ENCODE measurements at regions of chr15 and their contacts with region 1.

Region 1: GRCh38 chr15:55799291-55800212 is 56.6 kb upstream of the PRTG start:
- DNase-seq: peak; percentile 55 to 86
- H3K4me3 ChIP-seq: no peak overlapping the region
- H3K4me1 ChIP-seq: peaks cover 12% of the 10 kb centered on the region
- H3K27me3 ChIP-seq: peaks cover 3% of the 10 kb centered on the region; the same call in 1 of the 2 replicates

Region 2: DNA sequence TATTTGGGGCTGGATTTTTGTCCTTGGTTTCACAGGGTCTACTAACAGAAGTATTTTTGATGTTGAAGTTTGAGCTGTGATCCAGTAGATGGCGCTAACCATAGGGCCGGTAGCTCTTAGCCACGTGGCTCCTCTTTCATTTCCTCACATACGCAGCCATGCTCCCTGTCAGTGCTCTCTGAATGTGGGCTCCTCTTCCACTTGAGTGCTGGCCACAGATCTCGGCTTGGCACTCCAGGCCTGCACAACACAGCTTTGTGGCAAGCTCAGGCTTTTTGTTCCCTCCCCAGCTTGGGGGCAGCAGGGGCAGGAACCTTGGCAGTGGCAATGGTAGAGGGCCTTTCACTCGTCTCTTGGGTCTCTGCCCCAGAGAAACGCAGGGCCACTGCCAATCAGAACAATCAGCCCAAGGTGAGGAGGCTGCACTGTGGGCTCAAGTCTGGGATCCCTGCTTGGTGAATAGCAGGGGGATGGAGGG is 273.0 kb before region 1 on chr15:
- in situ Hi-C with region 1: loop called (anchors 10 kb)
- DNase-seq: peak; percentile 61 to 75
- H3K4me3 ChIP-seq: no peak overlapping the region
- H3K4me1 ChIP-seq: no peaks in the 10 kb centered on the region; the same call in 1 of the 2 replicates
- H3K27me3 ChIP-seq: 0 out of 2 replicates have a peak, but pooled peaks cover 2% of the 10 kb centered on the region

Region 3: DNA sequence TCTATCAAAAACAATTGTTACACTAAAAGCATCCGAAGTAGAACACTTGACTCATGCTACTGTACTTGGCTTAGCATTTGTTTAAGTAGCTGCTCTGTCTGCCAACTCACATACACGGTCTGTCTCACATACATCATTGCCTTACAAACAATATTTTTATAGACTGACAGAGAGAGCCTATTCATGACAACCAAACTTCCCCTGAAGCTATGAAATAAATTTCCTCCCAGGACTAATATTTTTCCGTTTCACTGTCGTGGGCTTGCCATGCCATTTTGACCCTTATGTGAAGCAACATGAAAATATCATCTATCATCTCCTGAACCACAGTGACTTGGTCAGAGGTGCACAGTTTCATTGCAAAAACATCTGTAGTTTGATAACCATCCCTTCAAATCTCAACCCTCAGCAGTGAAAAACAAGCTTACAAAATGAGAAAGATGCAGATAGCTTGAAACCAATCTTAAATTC is 145.0 kb before region 1 on chr15:
- in situ Hi-C with region 1: loop called (anchors 5 kb)
- DNase-seq: no peak
- H3K4me3 ChIP-seq: no peak overlapping the region
- H3K4me1 ChIP-seq: peaks cover 7% of the 10 kb centered on the region
- H3K27me3 ChIP-seq: no peaks in the 10 kb centered on the region

Region 4: GRCh38 chr15:55942332-55942731 is 142.8 kb after region 1 on chr15:
- in situ Hi-C with region 1: no loop called
- DNase-seq: no peak
- H3K4me3 ChIP-seq: no peak overlapping the region
- H3K4me1 ChIP-seq: no peaks in the 10 kb centered on the region
- H3K27me3 ChIP-seq: no peaks in the 10 kb centered on the region